ENCODE measurements at regions of chr19 and their contacts with region 1.

Region 1: GRCh38 chr19:53824134-53824611 is at the start of gene NLRP12:
- DNase-seq: no peak
- H3K4me3 ChIP-seq: no peak within 1 kb of the TSS
- H3K27ac ChIP-seq: no peak within 1 kb of the TSS
- H3K4me1 ChIP-seq: no peaks in the 10 kb centered on the region
- H3K27me3 ChIP-seq: peaks cover 2% of the 10 kb centered on the region
- CTCF ChIP-seq: no peak
- EP300 ChIP-seq: no peak
- POLR2A ChIP-seq: no peak
- total RNA-seq, gene NLRP12: 0.16 TPM in 1 of 4 donors, not detected in the others

Region 2: GRCh38 chr19:53772943-53773342 is 51.2 kb before region 1 on chr19:
- in situ Hi-C with region 1: no loop called
- intact Hi-C with region 1: no loop called
- DNase-seq: peak; percentile 21
- H3K4me3 ChIP-seq: no peak overlapping the region
- H3K27ac ChIP-seq: no peak overlapping the region
- H3K4me1 ChIP-seq: no peaks in the 10 kb centered on the region
- H3K27me3 ChIP-seq: peaks cover 5% of the 10 kb centered on the region
- CTCF ChIP-seq: peak; percentile 53 to 62 (median 58)
- EP300 ChIP-seq: no peak
- POLR2A ChIP-seq: no peak

Region 3: DNA sequence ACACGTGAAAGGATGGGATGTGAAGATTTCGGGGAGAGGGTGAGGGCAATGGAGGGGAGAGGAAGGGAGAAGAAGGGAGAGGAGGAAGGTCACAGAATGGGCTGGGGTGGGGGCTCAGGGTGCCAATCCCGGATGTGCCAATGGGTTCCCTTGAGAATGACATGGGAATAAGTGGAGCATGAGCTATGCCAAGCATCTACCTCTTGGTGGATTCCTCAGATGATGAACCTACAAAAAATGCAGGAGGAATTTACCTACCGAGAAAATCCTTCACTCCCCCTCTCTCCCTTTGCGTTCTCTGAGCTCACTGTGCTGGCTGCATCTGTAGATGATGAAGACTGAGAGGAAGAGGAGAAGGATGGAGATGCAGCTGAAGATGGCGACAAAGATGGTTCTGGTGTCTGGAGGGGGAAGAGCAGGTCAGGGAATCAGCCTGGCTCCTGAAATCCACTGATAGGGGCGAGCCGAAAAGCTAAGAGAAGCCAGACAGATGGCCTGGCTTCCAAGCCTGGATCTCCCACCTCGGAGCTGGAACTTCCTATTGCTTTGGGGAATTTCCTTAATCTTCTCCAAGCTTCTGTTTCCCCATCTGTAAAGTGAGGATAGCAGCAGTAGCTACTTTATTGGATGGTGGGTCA is 217.9 kb after region 1 on chr19:
- in situ Hi-C with region 1: loop called in 3 of 4 experiments (anchors 10 to 25 kb)
- intact Hi-C with region 1: no loop called
- DNase-seq: no peak
- H3K4me3 ChIP-seq: no peak overlapping the region
- H3K27ac ChIP-seq: no peak overlapping the region
- H3K4me1 ChIP-seq: no peaks in the 10 kb centered on the region
- H3K27me3 ChIP-seq: peaks cover 16% of the 10 kb centered on the region
- CTCF ChIP-seq: no peak
- EP300 ChIP-seq: no peak
- POLR2A ChIP-seq: no peak

Measured in transverse colon (tissue), 4 donors.